Prostate gland (tissue), 2 donors: ENCODE measurements at regions of chr4 and their contacts with region 1.

Region 1: GRCh38 chr4:82900331-82901128 is at the start of gene THAP9:
- DNase-seq: peak; percentile 99
- H3K4me3 ChIP-seq: peak within 1 kb of the TSS; percentile 42 to 49
- H3K27ac ChIP-seq: peak within 1 kb of the TSS; percentile 96 to 99
- H3K4me1 ChIP-seq: no peaks in the 10 kb centered on the region
- H3K27me3 ChIP-seq: no peaks in the 10 kb centered on the region
- CTCF ChIP-seq: no peak
- POLR2A ChIP-seq: peak; percentile 82
- total RNA-seq, gene THAP9: 7.6 to 8.6 TPM

Region 2: GRCh38 chr4:82428969-82429727 is 471.4 kb before region 1 on chr4:
- intact Hi-C with region 1: loop called (anchors 2 kb)
- DNase-seq: peak; percentile 90
- H3K4me3 ChIP-seq: peak overlapping the region; percentile 90 to 96
- H3K27ac ChIP-seq: peak overlapping the region; percentile 98
- H3K4me1 ChIP-seq: peaks cover 3% of the 10 kb centered on the region
- H3K27me3 ChIP-seq: no peaks in the 10 kb centered on the region
- CTCF ChIP-seq: peak; percentile 95 to 100 (median 99)
- POLR2A ChIP-seq: peak; percentile 79

Region 3: DNA sequence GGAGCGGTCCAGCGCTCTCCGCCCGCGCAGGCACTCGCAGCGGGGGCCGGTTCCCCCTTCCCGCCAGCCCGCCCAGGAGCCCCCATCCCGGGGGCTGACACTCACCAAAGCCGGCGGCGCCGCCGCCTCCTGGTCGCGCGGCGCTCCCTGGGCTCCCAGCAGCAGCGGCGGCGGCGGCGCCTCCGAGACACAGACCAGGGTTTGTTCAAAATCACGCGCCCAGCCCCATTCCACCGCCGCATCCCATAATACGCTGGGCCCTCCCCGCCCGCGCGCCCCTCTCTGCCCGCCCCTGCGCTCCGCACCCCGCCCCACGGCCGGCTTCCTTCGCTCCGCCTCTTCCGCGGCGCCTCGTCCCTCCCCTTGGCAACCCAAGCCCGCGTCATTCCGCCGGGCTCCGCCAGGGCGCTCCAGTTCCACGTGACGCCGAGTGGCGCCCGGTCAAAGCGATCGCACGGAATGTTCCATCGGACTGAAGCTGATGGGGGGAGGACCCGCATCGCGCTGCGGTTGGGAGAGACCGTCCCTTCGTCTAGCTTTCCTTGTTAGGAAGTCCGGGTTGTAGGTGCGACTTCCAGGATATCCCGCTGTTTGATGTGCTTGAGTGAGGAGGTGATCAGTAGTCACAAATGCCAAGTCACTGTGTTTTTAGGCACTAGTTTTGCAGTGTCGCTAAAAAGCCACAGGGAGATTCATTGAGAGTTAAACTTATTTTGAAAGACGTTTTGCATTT is 112.3 kb after region 1 on chr4:
- intact Hi-C with region 1: loop called (anchors 5 kb)
- DNase-seq: peak; percentile 95
- H3K4me3 ChIP-seq: peak overlapping the region; percentile 61 to 82
- H3K27ac ChIP-seq: peak overlapping the region; percentile 88 to 90
- H3K4me1 ChIP-seq: no peaks in the 10 kb centered on the region
- H3K27me3 ChIP-seq: no peaks in the 10 kb centered on the region
- CTCF ChIP-seq: peak; percentile 35 to 93 (median 70)
- POLR2A ChIP-seq: peak; percentile 72

Region 4: GRCh38 chr4:83022724-83023450 is 122.4 kb after region 1 on chr4:
- intact Hi-C with region 1: no loop called
- DNase-seq: no peak
- H3K4me3 ChIP-seq: no peak overlapping the region
- H3K27ac ChIP-seq: no peak overlapping the region
- H3K4me1 ChIP-seq: no peaks in the 10 kb centered on the region
- H3K27me3 ChIP-seq: no peaks in the 10 kb centered on the region
- CTCF ChIP-seq: no peak
- POLR2A ChIP-seq: no peak

Region 5: DNA sequence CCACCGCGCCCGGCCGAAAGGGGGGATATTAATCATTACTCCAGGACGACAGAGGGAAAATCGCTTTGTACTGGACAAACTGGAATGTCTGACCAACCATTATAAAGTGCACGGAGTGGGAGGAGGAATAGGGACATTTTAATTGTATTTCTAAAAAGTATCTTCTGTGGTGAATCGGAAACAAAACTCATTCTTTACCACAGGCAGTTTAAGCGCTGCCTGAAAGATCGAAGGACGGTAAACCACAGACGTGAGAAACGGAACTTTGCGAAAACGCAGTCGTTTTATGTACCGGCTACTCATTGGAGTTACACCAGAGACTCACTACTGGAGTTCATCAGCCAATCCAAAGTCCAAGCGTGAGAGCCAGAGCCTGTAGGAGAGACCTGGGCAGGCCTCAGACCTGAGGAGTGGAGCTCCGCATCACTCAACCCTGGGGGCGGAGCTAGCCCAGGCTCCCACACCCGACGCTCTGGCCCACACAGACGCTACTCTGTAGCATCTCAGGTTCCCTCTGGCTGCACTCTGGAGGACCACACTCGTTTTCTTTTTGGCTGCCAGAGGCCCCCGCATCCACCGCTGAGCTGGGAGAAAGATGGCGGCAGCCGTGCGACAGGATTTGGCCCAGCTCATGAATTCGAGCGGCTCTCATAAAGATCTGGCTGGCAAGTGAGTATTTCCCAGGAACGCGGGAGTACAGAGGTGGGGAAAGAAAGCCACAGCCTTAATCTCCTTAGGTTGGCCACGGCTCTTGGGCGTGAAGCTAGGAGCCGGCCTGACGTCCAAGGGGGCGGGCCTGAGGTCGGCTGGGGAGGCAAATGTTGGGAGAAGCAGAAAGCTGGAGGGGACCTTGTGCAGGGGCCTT is 134.3 kb after region 1 on chr4 and contains the start of gene COPS4:
- intact Hi-C with region 1: loop called (anchors 2 kb)
- DNase-seq: peak; percentile 99
- H3K4me3 ChIP-seq: peak within 1 kb of the TSS; percentile 56 to 58
- H3K27ac ChIP-seq: peak within 1 kb of the TSS; percentile 85 to 87
- H3K4me1 ChIP-seq: no peaks in the 10 kb centered on the region
- H3K27me3 ChIP-seq: no peaks in the 10 kb centered on the region
- CTCF ChIP-seq: peak in 3 of 4 experiments; percentile 38 to 75 (median 69)
- POLR2A ChIP-seq: peak; percentile 82
- total RNA-seq, gene COPS4: 50.5 to 56.9 TPM

Region 6: GRCh38 chr4:83284193-83285054 is 383.9 kb after region 1 on chr4 and contains the start of gene COQ2:
- intact Hi-C with region 1: loop called (anchors 5 kb)
- DNase-seq: peak; percentile 93
- H3K4me3 ChIP-seq: peak within 1 kb of the TSS; percentile 66 to 71
- H3K27ac ChIP-seq: peak within 1 kb of the TSS; percentile 93 to 95
- H3K4me1 ChIP-seq: peaks cover 4% of the 10 kb centered on the region
- H3K27me3 ChIP-seq: no peaks in the 10 kb centered on the region
- CTCF ChIP-seq: peak in 3 of 4 experiments; percentile 40 to 65 (median 54)
- POLR2A ChIP-seq: peak; percentile 61
- total RNA-seq, gene COQ2: 12.8 to 13.1 TPM